Caco-2 (cell line): ENCODE measurements at regions of chr6 and their contacts with region 1.

Region 1: GRCh38 chr6:148231572-148231971 is 111.1 kb upstream of the SASH1 start:
- DNase-seq: no peak
- H3K4me3 ChIP-seq: no peak overlapping the region
- H3K4me3 Mint-ChIP-seq: no peak overlapping the region
- H3K27ac Mint-ChIP-seq: no peak overlapping the region
- H3K4me1 ChIP-seq: no peaks in the 10 kb centered on the region
- H3K4me1 Mint-ChIP-seq: no peaks in the 10 kb centered on the region
- H3K27me3 ChIP-seq: no peaks in the 10 kb centered on the region
- H3K27me3 Mint-ChIP-seq: no peaks in the 10 kb centered on the region
- CTCF ChIP-seq: no peak

Region 2: DNA sequence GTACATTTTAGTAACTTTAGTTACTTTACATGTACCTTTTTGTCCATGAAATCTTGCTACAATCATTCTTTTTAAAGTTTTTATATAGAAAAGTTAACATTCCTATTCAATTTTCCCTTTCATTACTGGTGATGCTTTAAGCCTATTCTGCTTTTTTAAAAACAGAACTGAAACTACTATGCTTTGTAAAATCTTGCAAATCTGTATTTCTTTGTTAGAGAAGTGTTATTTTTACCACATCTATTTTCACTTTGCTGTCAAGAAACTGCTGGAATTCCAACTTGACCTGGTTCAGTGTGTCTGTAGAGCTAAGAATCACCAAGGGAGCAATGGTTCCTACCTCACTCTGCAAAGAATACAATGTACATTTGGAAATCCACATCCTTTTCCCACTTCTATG is 744.9 kb before region 1 on chr6:
- CTCF ChIA-PET with region 1: no interaction called
- POLR2A ChIA-PET with region 1: interaction called, 11 read pairs
- intact Hi-C with region 1: no loop called
- DNase-seq: no peak
- H3K4me3 ChIP-seq: no peak overlapping the region
- H3K4me3 Mint-ChIP-seq: no peak overlapping the region
- H3K27ac Mint-ChIP-seq: no peak overlapping the region
- H3K4me1 ChIP-seq: no peaks in the 10 kb centered on the region
- H3K4me1 Mint-ChIP-seq: no peaks in the 10 kb centered on the region
- H3K27me3 ChIP-seq: no peaks in the 10 kb centered on the region
- H3K27me3 Mint-ChIP-seq: no peaks in the 10 kb centered on the region
- CTCF ChIP-seq: no peak

Region 3: DNA sequence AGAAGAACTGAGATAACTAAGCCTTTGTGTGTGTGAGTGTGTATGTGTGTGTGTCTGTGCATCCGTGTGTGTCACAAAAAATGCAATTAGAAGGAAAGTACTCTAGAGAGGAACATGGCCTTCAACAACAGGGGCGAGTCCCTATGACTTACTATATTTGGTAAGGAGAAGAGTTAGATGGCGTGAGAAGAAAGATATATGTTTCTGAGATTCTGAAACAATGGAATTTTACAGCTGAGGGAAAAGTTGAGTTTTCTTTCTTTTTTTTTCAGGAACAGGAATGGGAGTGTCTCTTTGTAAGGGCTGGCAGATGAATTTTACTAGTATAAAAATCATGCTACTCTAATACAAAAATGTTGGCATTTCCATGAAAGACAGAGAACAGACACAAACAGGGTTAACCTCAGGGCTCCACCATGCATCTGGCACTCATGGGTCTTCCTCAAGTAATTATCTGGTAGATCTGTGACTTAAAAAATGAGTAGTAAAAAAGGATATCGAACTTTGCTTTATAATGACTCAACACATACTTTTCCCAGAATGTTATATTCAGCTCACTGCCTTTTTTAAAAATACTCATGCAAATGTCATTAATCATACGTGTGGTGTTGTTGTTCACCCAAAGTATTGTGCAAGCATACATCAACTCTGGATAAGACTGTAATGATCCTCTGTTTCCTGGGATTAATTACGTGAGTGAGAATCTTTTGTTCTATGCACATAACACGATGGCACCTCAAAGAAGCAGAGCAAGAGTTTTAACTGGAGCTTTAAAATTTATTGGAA is 98.2 kb after region 1 on chr6:
- CTCF ChIA-PET with region 1: no interaction called
- POLR2A ChIA-PET with region 1: no interaction called
- intact Hi-C with region 1: no loop called
- DNase-seq: no peak
- H3K4me3 ChIP-seq: no peak overlapping the region
- H3K4me3 Mint-ChIP-seq: no peak overlapping the region
- H3K27ac Mint-ChIP-seq: no peak overlapping the region
- H3K4me1 ChIP-seq: no peaks in the 10 kb centered on the region
- H3K4me1 Mint-ChIP-seq: peaks cover 5% of the 10 kb centered on the region
- H3K27me3 ChIP-seq: no peaks in the 10 kb centered on the region
- H3K27me3 Mint-ChIP-seq: no peaks in the 10 kb centered on the region
- CTCF ChIP-seq: no peak

Region 4: GRCh38 chr6:148358188-148358785 is 126.7 kb after region 1 on chr6:
- CTCF ChIA-PET with region 1: no interaction called
- POLR2A ChIA-PET with region 1: no interaction called
- intact Hi-C with region 1: no loop called
- DNase-seq: no peak
- H3K4me3 ChIP-seq: no peak overlapping the region
- H3K4me3 Mint-ChIP-seq: no peak overlapping the region
- H3K27ac Mint-ChIP-seq: no peak overlapping the region
- H3K4me1 ChIP-seq: peaks cover 5% of the 10 kb centered on the region; the same call in 1 of the 2 replicates
- H3K4me1 Mint-ChIP-seq: no peaks in the 10 kb centered on the region
- H3K27me3 ChIP-seq: no peaks in the 10 kb centered on the region
- H3K27me3 Mint-ChIP-seq: no peaks in the 10 kb centered on the region
- CTCF ChIP-seq: no peak

Region 5: GRCh38 chr6:148398244-148398643 is 166.7 kb after region 1 on chr6:
- CTCF ChIA-PET with region 1: no interaction called
- POLR2A ChIA-PET with region 1: no interaction called
- intact Hi-C with region 1: no loop called
- DNase-seq: no peak
- H3K4me3 ChIP-seq: no peak overlapping the region
- H3K4me3 Mint-ChIP-seq: no peak overlapping the region
- H3K27ac Mint-ChIP-seq: peak overlapping the region; percentile 27
- H3K4me1 ChIP-seq: peaks cover 20% of the 10 kb centered on the region
- H3K4me1 Mint-ChIP-seq: peaks cover 7% of the 10 kb centered on the region
- H3K27me3 ChIP-seq: no peaks in the 10 kb centered on the region
- H3K27me3 Mint-ChIP-seq: no peaks in the 10 kb centered on the region
- CTCF ChIP-seq: no peak